HepG2 (cell line): ENCODE measurements at regions of chr10 and their contacts with region 1.

Region 1: GRCh38 chr10:80444646-80445319 is 9.3 kb upstream of the TSPAN14 start:
- DNase-seq: peak; percentile 58
- ATAC-seq: peak; percentile 91
- H3K4me3 ChIP-seq: no peak overlapping the region
- H3K27ac ChIP-seq: no peak overlapping the region
- H3K4me1 ChIP-seq: peaks cover 53% of the 10 kb centered on the region
- H3K27me3 ChIP-seq: no peaks in the 10 kb centered on the region
- CTCF ChIP-seq: peak; percentile 78
- EP300 ChIP-seq: no peak
- POLR2A ChIP-seq: no peak
- RAD21 ChIP-seq: peak; percentile 51; the same call in 1 of the 2 replicates

Region 2: DNA sequence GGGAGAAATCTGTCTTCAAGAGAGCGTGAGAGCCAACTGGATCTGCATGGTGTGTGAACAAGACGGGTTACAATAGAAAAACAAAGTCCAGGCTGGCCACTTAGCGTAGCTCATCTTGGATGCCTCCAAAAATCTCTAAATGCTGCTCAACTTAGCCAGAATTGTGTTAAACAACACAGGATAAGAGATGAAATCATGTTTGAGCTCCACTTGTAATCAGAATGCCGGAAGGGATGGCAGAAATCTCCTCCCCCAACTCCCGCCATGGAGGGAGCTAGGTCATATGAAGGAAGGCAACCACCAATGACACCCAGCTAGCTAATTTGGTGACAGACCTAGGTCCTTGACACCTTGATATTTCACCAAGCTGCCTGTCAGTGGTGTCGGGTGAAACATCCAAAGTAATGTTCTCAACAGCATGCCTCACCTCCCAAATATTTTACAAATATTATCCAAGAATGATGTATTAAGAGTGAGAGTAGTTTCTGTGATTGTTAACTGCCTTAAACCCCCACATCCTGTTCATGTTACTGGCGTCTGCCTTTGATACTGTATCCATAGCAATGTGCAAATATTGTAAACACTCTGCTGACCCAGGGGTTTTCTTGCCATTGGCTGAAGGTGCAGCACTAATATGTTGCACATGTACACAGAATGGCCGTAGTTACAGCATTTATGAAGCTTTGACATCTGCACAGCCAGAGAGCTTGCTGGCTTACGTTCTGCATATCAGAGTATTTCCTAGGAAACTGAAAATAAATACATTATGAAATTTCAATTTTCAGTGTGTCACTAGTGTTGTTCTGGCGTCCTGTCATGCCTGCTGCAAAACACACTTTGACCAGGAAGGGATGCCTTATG is 340.5 kb before region 1 on chr10:
- CTCF ChIA-PET with region 1: no interaction called
- POLR2A ChIA-PET with region 1: no interaction called
- in situ Hi-C with region 1: no loop called
- intact Hi-C with region 1: no loop called
- DNase-seq: peak; percentile 16
- ATAC-seq: peak; percentile 71
- H3K4me3 ChIP-seq: no peak overlapping the region
- H3K27ac ChIP-seq: no peak overlapping the region
- H3K4me1 ChIP-seq: peaks cover 22% of the 10 kb centered on the region; the same call in 1 of the 2 replicates
- H3K27me3 ChIP-seq: no peaks in the 10 kb centered on the region
- CTCF ChIP-seq: no peak
- EP300 ChIP-seq: no peak
- POLR2A ChIP-seq: no peak
- RAD21 ChIP-seq: no peak

Region 3: GRCh38 chr10:80260295-80261243 is 184.2 kb before region 1 on chr10:
- CTCF ChIA-PET with region 1: no interaction called
- POLR2A ChIA-PET with region 1: no interaction called
- in situ Hi-C with region 1: no loop called
- intact Hi-C with region 1: loop called (anchors 2 kb)
- DNase-seq: peak; percentile 48
- ATAC-seq: peak; percentile 37
- H3K4me3 ChIP-seq: no peak overlapping the region
- H3K27ac ChIP-seq: no peak overlapping the region
- H3K4me1 ChIP-seq: peaks cover 69% of the 10 kb centered on the region
- H3K27me3 ChIP-seq: no peaks in the 10 kb centered on the region
- CTCF ChIP-seq: peak; percentile 78
- EP300 ChIP-seq: no peak
- POLR2A ChIP-seq: no peak
- RAD21 ChIP-seq: peak; percentile 18; the same call in 1 of the 2 replicates

Region 4: GRCh38 chr10:80356563-80356988 is 88.2 kb before region 1 on chr10 and contains the starts of genes DYDC1 and DYDC2:
- CTCF ChIA-PET with region 1: no interaction called
- POLR2A ChIA-PET with region 1: no interaction called
- in situ Hi-C with region 1: no loop called
- intact Hi-C with region 1: no loop called
- DNase-seq: no peak
- ATAC-seq: no peak
- H3K4me3 ChIP-seq: no peak within 1 kb of the TSS; a peak in 1 of 6 replicates
- H3K27ac ChIP-seq: no peak within 1 kb of the TSS
- H3K4me1 ChIP-seq: peaks cover 15% of the 10 kb centered on the region
- H3K27me3 ChIP-seq: no peaks in the 10 kb centered on the region
- CTCF ChIP-seq: no peak
- EP300 ChIP-seq: no peak
- POLR2A ChIP-seq: no peak
- RAD21 ChIP-seq: no peak
- total RNA-seq, gene DYDC1: not detected in 2 replicates
- total RNA-seq, gene DYDC2: 2.3 and 4.2 TPM in 2 replicates

Region 5: GRCh38 chr10:80392276-80392675 is 52.5 kb before region 1 on chr10:
- CTCF ChIA-PET with region 1: no interaction called
- POLR2A ChIA-PET with region 1: no interaction called
- in situ Hi-C with region 1: loop called (anchors 5 kb)
- intact Hi-C with region 1: no loop called
- DNase-seq: no peak
- ATAC-seq: peak; percentile 13; the same call in 2 of the 3 replicates
- H3K4me3 ChIP-seq: peak overlapping the region in 1 of 3 experiments; percentile 30; a peak in 3 of 6 replicates
- H3K27ac ChIP-seq: no peak overlapping the region
- H3K4me1 ChIP-seq: peaks cover 33% of the 10 kb centered on the region
- H3K27me3 ChIP-seq: peaks cover 2 to 5% of the 10 kb centered on the region in 2 experiments; a peak in 2 of 5 replicates
- CTCF ChIP-seq: no peak
- EP300 ChIP-seq: no peak
- POLR2A ChIP-seq: no peak
- RAD21 ChIP-seq: no peak

Region 6: GRCh38 chr10:80504158-80504811 is 59.5 kb after region 1 on chr10:
- CTCF ChIA-PET with region 1: interaction called, 65 read pairs
- POLR2A ChIA-PET with region 1: interaction called, 28 read pairs
- in situ Hi-C with region 1: no loop called
- intact Hi-C with region 1: loop called (anchors 1 kb)
- DNase-seq: no peak
- ATAC-seq: peak; percentile 24
- H3K4me3 ChIP-seq: peak overlapping the region in 1 of 3 experiments; percentile 7; a peak in 1 of 6 replicates
- H3K27ac ChIP-seq: peak overlapping the region; percentile 58
- H3K4me1 ChIP-seq: peaks cover 84% of the 10 kb centered on the region
- H3K27me3 ChIP-seq: no peaks in the 10 kb centered on the region
- CTCF ChIP-seq: no peak
- EP300 ChIP-seq: no peak
- POLR2A ChIP-seq: no peak
- RAD21 ChIP-seq: no peak

Region 7: DNA sequence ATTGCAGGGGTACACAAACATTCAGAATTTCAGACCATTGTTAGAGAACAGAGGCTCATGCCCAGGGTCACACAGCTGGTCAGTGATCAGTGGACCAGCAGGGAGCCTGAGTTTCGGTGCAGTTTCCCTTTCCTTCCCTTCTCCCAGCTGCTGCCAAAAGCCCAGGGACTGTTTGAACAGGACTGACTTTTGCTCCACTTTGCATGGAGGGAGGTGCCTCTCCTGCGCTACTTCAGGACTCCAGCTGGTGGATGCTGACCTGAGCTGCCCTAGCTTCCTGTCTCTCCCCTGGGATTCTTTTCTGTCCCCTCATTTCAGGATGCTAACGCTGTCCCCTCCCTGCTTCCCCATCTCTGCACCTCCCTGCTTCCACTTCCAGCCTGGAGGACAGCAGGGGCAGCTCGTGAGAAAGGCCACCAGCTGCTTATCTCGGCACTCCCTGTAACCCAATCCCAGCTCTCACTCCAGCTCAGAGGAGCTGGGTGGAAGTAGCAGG is 107.4 kb after region 1 on chr10:
- CTCF ChIA-PET with region 1: no interaction called
- POLR2A ChIA-PET with region 1: no interaction called
- in situ Hi-C with region 1: no loop called
- intact Hi-C with region 1: no loop called
- DNase-seq: peak; percentile 19
- ATAC-seq: peak; percentile 96
- H3K4me3 ChIP-seq: no peak overlapping the region
- H3K27ac ChIP-seq: no peak overlapping the region
- H3K4me1 ChIP-seq: peaks cover 13% of the 10 kb centered on the region
- H3K27me3 ChIP-seq: 0 out of 5 replicates have a peak, but pooled peaks cover 0 to 3% of the 10 kb centered on the region in 2 experiments
- CTCF ChIP-seq: no peak
- EP300 ChIP-seq: no peak
- POLR2A ChIP-seq: no peak
- RAD21 ChIP-seq: no peak

Region 8: GRCh38 chr10:80599424-80599847 is 154.7 kb after region 1 on chr10:
- CTCF ChIA-PET with region 1: no interaction called
- POLR2A ChIA-PET with region 1: no interaction called
- in situ Hi-C with region 1: no loop called
- intact Hi-C with region 1: loop called (anchors 5 kb)
- DNase-seq: peak; percentile 20
- ATAC-seq: peak; percentile 88
- H3K4me3 ChIP-seq: no peak overlapping the region
- H3K27ac ChIP-seq: no peak overlapping the region
- H3K4me1 ChIP-seq: no peaks in the 10 kb centered on the region
- H3K27me3 ChIP-seq: peaks cover 0 to 3% of the 10 kb centered on the region in 2 experiments; a peak in 2 of 5 replicates
- CTCF ChIP-seq: peak; percentile 79
- EP300 ChIP-seq: no peak
- POLR2A ChIP-seq: no peak
- RAD21 ChIP-seq: no peak

Region 9: DNA sequence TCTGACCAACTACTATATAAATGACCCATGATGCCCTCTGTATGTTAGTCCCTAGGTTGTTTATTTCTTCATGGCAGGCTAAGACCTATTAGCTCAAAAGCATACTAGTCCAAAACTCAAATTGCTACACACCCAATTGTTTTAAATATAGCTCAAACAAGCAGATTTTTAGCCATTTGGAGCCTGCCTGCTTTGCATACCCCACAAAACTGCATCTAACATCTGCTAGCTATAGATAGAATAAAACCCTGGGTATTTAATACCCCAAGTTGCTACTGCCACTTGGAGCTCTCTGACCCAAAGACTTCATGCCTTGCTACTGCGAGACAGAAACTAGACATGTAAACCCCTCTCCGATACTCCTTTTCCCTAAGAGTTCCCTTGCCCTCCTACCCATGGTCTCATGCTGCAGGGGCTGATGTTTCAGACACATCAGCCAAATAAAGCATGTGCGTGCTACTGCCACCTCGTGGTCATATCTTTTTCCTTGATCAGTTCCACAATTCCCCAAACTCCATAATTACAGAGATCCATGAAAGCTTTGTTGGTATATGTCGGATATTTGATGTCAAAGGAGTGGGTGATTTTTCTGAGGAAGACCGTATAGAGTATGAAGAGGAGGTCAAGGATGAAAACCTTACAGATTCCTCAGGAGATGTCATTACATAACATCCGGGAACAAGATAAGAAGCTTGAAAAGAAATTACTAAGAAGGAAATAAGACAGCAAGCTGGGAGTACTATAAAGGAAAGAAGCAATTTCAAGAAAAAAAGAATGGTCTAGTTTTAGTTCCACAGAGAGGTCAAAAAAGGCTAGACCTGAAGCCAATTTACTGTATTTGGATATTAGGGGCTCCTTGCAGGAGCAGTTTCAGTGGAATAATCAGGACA is 479.5 kb after region 1 on chr10:
- CTCF ChIA-PET with region 1: no interaction called
- POLR2A ChIA-PET with region 1: no interaction called
- in situ Hi-C with region 1: no loop called
- intact Hi-C with region 1: loop called (anchors 10 kb)
- DNase-seq: peak; percentile 33
- ATAC-seq: peak; percentile 85
- H3K4me3 ChIP-seq: no peak overlapping the region
- H3K27ac ChIP-seq: no peak overlapping the region
- H3K4me1 ChIP-seq: no peaks in the 10 kb centered on the region
- H3K27me3 ChIP-seq: no peaks in the 10 kb centered on the region; a peak in 1 of 5 replicates
- CTCF ChIP-seq: peak; percentile 73
- EP300 ChIP-seq: no peak
- POLR2A ChIP-seq: no peak
- RAD21 ChIP-seq: 0 out of 2 replicates have a peak, but pooled peaks have one; percentile 20